ENCODE measurements at regions of chr3 and their contacts with region 1.

Region 1: DNA sequence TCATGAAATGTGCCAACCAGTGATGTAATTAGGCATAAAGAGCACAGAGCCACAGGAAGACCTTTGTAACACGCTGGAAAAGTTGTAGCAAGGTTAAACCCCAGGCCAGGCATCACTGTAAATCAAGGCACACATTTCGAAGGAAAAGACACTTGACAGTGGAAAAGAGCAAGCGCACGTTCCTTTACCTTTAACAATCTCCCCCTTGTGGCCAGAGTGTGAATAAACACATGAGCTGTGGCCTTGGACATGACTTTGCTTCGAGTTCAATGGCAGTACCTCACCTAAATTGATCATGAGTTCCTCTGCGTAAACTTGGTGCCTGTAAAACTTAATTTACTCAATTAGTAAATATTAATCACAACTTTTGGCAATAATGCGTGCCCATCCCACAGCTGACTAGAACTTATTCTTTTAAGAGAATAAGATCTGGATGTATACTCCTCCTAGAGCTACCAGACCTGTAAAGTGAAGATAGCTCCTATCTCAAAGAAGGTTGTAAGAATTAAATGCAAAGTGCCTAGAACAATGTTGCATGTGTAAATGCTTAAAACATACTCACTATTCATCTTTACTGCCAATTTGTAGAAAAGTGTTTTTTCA is 757.0 kb upstream of the NECTIN3 start:
- DNase-seq: peak; percentile 50 to 52
- H3K4me3 ChIP-seq: no peak overlapping the region
- H3K27ac ChIP-seq: no peak overlapping the region
- H3K4me1 ChIP-seq: no peaks in the 10 kb centered on the region
- H3K27me3 ChIP-seq: no peaks in the 10 kb centered on the region
- CTCF ChIP-seq: peak; percentile 41 to 79 (median 68)
- POLR2A ChIP-seq: no peak

Region 2: GRCh38 chr3:109731620-109732473 is 582.8 kb before region 1 on chr3:
- intact Hi-C with region 1: loop called (anchors 10 kb)
- DNase-seq: peak; percentile 57
- H3K4me3 ChIP-seq: no peak overlapping the region
- H3K27ac ChIP-seq: no peak overlapping the region
- H3K4me1 ChIP-seq: peaks cover 11 to 12% of the 10 kb centered on the region in 2 donors
- H3K27me3 ChIP-seq: no peaks in the 10 kb centered on the region
- CTCF ChIP-seq: peak; percentile 88 to 93 (median 92)
- POLR2A ChIP-seq: no peak

Region 3: GRCh38 chr3:110362751-110363150 is 48.1 kb after region 1 on chr3:
- intact Hi-C with region 1: no loop called
- DNase-seq: no peak
- H3K4me3 ChIP-seq: no peak overlapping the region
- H3K27ac ChIP-seq: no peak overlapping the region
- H3K4me1 ChIP-seq: no peaks in the 10 kb centered on the region
- H3K27me3 ChIP-seq: no peaks in the 10 kb centered on the region
- CTCF ChIP-seq: no peak
- POLR2A ChIP-seq: no peak